ENCODE measurements at regions of chr13 and their contacts with region 1.

Region 1: DNA sequence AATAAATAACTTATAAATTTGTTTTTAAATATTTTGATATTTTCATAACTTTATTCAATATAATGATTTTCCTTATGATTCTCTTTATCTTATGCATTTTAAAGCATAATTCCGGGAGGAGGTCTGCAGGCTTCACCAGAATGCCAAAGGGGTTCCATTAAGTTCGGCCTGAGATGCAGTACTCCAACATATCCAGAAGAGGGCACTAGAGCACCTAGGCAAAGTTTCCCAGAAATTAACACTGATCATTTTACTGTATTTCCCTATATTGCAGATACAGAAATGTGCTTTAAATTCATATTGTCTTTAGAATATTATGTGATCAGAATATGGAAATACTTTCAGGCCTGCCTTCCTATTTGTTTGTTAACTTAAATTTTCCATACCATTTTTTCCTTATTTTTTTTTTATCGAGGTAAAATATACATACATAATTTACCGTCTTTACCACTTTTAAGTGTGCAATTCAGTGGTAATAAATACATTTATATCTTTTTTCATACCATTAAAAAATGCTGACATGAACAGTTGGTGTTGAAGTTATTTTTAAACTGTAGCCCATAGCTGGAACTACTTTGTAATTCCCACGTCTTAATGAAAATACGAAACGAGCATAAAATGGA is 58.9 kb upstream of the TM9SF2 start:
- DNase-seq: peak; percentile 60
- ATAC-seq: peak; percentile 86
- H3K4me3 Mint-ChIP-seq: no peak overlapping the region
- H3K27ac Mint-ChIP-seq: no peak overlapping the region
- H3K4me1 Mint-ChIP-seq: peaks cover 7% of the 10 kb centered on the region
- H3K27me3 Mint-ChIP-seq: peaks cover 2% of the 10 kb centered on the region
- CTCF ChIP-seq: peak; percentile 97

Region 2: DNA sequence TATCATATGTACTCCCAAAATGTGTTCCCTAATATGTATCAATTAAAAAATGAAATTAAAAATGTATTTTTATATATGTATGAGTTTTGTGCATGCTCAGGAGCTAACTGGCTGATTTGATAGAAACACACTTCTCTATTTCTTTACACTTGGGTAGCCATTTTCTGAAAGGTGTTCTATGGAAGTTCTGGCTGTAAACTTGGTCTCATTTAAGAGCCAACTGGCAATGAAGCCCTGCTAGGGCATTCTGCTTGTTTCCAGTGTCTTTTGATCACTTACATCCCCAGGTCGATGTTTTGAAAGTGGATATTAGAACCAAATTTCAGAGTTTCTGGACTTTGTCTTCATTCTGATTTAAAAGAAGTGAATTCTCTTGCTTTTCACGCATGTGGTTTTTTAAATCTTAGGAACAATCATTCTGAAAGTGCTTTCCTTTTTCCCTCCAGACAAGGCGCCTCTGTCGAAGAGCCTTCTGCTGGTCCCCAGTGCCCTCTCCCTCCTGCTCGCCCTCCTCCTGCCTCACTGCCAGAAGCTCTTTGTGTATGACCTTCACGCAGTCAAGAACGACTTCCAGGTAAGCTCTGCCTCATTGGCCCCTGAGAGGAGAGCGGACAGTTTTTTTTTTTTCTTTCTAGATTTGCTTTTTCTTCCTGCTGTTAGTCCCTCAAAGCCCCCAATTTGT is 204.3 kb before region 1 on chr13:
- CTCF ChIA-PET with region 1: no interaction called
- POLR2A ChIA-PET with region 1: no interaction called
- intact Hi-C with region 1: no loop called
- DNase-seq: peak; percentile 47
- ATAC-seq: peak; percentile 87
- H3K4me3 Mint-ChIP-seq: peak overlapping the region; percentile 73
- H3K27ac Mint-ChIP-seq: peak overlapping the region; percentile 92
- H3K4me1 Mint-ChIP-seq: peaks cover 59% of the 10 kb centered on the region
- H3K27me3 Mint-ChIP-seq: no peaks in the 10 kb centered on the region
- CTCF ChIP-seq: no peak

Region 3: GRCh38 chr13:99467764-99468163 is 25.4 kb after region 1 on chr13:
- CTCF ChIA-PET with region 1: interaction called, 12 read pairs
- POLR2A ChIA-PET with region 1: interaction called, 4 read pairs
- intact Hi-C with region 1: no loop called
- DNase-seq: no peak
- ATAC-seq: no peak
- H3K4me3 Mint-ChIP-seq: no peak overlapping the region
- H3K27ac Mint-ChIP-seq: no peak overlapping the region
- H3K4me1 Mint-ChIP-seq: peaks cover 18% of the 10 kb centered on the region
- H3K27me3 Mint-ChIP-seq: no peaks in the 10 kb centered on the region
- CTCF ChIP-seq: no peak

Measured in activated CD8-positive, alpha-beta T cell treated with anti-CD3 and anti-CD28 coated beads for 36 hours (primary cell).